Activated CD4-positive, alpha-beta T cell treated with anti-CD3 and anti-CD28 coated beads, Interleukin-2, amount 10 ng/mL, durations not matched to agents 24 days and 14 days (primary cell): ENCODE measurements at regions of chr4 and their contacts with region 1.

Region 1: GRCh38 chr4:2745981-2746806 is 9.9 kb downstream of the TNIP2 start:
- DNase-seq: peak; percentile 97
- H3K4me3 Mint-ChIP-seq: peak overlapping the region; percentile 81
- H3K27ac Mint-ChIP-seq: peak overlapping the region; percentile 94
- H3K4me1 Mint-ChIP-seq: peaks cover 60% of the 10 kb centered on the region
- H3K27me3 Mint-ChIP-seq: no peaks in the 10 kb centered on the region

Region 2: GRCh38 chr4:2241410-2242353 is 504.5 kb before region 1 on chr4 and contains the starts of genes HAUS3 and POLN:
- intact Hi-C with region 1: loop called (anchors 2 kb)
- DNase-seq: peak; percentile 100
- H3K4me3 Mint-ChIP-seq: peak within 1 kb of the TSS; percentile 84
- H3K27ac Mint-ChIP-seq: peak within 1 kb of the TSS; percentile 93
- H3K4me1 Mint-ChIP-seq: peaks cover 49% of the 10 kb centered on the region
- H3K27me3 Mint-ChIP-seq: peaks cover 2% of the 10 kb centered on the region
- total RNA-seq, gene HAUS3: 19.3 and 19.4 TPM in 2 replicates
- total RNA-seq, gene POLN: 1.9 and 2.3 TPM in 2 replicates

Region 3: GRCh38 chr4:2536193-2537010 is 209.8 kb before region 1 on chr4 and contains the start of gene FAM193A:
- intact Hi-C with region 1: loop called (anchors 1 kb)
- DNase-seq: peak; percentile 100
- H3K4me3 Mint-ChIP-seq: peak within 1 kb of the TSS; percentile 92
- H3K27ac Mint-ChIP-seq: peak within 1 kb of the TSS; percentile 95
- H3K4me1 Mint-ChIP-seq: peaks cover 11% of the 10 kb centered on the region
- H3K27me3 Mint-ChIP-seq: no peaks in the 10 kb centered on the region
- total RNA-seq, gene FAM193A: 29.5 and 30.1 TPM in 2 replicates

Region 4: GRCh38 chr4:2714061-2714770 is 32.0 kb before region 1 on chr4:
- intact Hi-C with region 1: loop called (anchors 5 kb)
- DNase-seq: peak; percentile 84
- H3K4me3 Mint-ChIP-seq: peak overlapping the region; percentile 68
- H3K27ac Mint-ChIP-seq: peak overlapping the region; percentile 84
- H3K4me1 Mint-ChIP-seq: peaks cover 26% of the 10 kb centered on the region
- H3K27me3 Mint-ChIP-seq: no peaks in the 10 kb centered on the region

Region 5: DNA sequence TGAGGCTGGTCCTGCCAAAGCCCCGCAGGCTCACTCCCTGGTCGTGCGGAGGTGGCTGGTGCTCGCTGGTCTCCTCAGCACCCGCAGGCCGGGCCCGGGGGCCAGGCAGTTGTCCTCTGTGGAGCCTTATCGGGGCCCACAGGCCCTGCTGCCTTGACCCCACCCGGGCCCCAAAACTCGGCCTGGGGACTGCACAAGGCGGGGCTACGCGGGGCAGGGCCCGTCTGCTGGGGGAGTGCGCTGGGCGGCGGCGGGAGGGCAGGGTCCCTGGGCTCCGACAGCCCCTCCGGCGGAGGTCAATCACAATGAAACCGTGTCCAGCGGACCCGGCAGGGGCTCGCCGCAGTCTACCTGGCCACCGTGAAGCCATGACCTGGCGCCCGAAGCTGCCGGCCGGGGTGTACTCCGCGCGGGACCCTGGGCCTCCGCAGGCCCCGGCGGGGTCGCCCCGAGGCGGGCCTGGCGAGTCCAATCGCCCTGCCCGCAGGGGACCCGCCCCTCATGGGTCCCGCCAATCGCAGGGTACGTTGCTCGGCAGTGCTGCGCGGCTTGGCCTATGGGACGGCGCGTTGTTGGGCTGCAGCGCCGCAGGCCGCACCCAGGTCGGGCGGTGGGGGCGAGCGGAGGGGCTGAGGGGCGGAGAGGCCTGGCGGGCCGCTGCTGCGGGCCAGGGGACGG is 97.2 kb after region 1 on chr4 and contains the start of gene ADD1:
- intact Hi-C with region 1: loop called (anchors 2 kb)
- DNase-seq: peak; percentile 100
- H3K4me3 Mint-ChIP-seq: peak within 1 kb of the TSS; percentile 91
- H3K27ac Mint-ChIP-seq: peak within 1 kb of the TSS; percentile 92
- H3K4me1 Mint-ChIP-seq: peaks cover 41% of the 10 kb centered on the region
- H3K27me3 Mint-ChIP-seq: no peaks in the 10 kb centered on the region
- total RNA-seq, gene ADD1: 187 and 198 TPM in 2 replicates

Region 6: DNA sequence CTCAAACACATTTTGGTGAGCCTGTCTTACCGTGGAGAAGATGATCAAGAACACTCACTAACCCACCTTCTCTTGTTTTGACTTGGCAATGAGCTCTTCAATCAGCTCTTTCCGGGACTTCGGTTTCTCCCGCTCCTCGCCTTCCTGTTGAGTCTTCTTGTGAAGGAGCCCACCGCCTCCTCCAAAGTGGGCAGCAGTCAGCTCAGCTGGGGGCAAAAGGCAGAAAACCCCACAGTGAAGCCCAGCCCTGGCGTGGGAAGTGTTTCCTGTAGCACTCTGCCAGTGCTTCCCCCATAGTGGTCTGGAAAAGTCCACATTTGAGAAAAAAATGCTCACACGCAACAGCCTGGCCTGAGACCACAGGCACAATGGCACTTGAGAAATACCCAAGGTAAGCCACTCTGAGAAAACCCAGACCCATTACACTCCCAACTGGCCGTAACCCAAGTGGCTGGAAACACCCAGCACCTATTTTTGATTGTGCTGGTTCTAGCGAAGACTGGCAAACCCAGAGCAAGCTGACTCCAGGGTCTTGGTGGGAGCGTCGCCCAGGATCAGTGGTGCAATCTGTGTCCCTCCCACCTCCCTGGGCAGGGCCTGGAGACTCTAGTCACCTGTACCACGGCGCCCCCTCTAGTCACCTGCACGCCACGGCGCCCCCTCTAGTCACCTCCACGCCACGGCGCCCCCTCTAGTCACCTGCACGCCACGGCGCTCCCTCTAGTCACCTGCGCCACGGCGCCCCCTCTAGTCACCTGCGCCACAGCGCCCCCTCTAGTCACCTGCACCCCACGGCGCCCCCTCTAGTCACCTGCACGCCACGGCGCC is 208.4 kb after region 1 on chr4:
- intact Hi-C with region 1: loop called (anchors 2 kb)
- DNase-seq: peak; percentile 86
- H3K4me3 Mint-ChIP-seq: peak overlapping the region; percentile 75
- H3K27ac Mint-ChIP-seq: peak overlapping the region; percentile 99
- H3K4me1 Mint-ChIP-seq: peaks cover 63% of the 10 kb centered on the region
- H3K27me3 Mint-ChIP-seq: no peaks in the 10 kb centered on the region

Region 7: DNA sequence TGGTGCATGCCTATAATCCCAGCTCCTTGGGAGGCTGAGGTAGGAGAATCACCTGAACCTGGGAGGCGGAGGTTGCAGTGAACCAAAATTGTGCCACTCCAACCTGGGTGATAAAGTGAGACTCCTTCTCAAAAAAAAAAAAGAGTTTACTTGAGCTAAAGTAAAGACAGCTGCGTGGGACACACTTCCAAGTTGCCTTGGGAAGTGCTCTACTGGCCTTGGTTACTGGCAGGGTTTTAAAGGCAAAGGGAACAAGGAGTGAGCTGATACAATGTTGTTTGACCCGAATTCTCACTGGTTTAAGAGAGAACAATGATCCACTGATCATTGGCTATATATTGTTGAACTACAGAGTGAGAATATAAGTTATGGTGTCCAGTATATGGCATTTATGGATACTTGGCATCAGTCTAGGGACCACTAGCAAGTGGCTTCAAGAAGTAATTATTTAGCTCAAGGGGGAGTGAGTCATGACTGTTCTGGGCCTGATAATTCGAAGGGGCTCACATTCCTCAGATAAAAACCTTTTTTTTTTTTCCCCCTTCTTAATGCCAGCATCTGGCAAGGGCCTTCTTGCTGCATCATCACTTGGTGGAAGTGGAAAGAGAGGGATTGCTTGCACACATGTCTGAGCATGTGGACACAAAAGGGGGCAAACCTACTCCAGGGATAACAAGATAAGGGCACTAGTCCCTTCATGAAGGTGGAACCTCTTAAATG is 249.5 kb after region 1 on chr4:
- intact Hi-C with region 1: no loop called
- DNase-seq: no peak
- H3K4me3 Mint-ChIP-seq: no peak overlapping the region
- H3K27ac Mint-ChIP-seq: no peak overlapping the region
- H3K4me1 Mint-ChIP-seq: no peaks in the 10 kb centered on the region
- H3K27me3 Mint-ChIP-seq: peaks cover 21% of the 10 kb centered on the region

Region 8: DNA sequence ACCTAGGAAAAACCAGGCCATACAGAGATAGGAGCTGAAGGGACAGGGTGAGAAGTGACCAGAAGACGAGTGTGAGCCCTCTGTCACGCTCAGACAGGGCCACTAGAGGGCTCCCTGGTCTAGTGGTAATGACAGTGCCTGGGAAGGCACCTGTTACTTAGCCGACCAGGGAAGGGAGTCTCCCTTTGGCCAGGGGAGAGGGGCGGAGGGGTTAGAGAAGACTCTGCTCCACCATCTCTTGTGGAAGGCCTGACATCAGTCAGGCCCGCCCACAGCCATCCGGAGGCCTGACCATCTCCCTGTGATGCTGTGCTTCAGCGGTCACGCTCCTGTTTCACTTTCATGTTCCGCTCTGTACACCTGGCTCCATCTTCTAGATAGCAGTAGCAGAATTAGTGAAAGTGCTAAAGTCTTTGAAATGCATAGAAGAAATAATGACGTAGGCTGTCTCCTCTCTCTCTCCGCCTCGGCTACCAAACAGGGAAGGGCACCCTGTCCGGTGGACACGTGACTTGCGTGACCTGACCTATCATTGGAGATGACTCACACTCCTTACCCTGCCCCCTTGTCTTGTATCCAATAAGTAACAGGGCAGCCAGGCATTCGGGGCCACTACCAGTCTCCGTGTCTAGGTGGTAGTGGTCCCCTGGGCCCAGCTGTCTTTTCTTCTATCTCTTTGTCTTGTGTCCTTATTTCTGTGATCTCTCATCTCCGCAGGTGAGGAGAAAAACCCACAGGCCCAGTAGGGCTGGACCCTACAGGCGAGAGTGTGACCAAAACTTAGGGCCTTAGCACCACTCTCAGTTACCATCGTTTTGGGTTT is 301.5 kb after region 1 on chr4:
- intact Hi-C with region 1: loop called (anchors 10 kb)
- DNase-seq: peak; percentile 95
- H3K4me3 Mint-ChIP-seq: peak overlapping the region; percentile 60
- H3K27ac Mint-ChIP-seq: peak overlapping the region; percentile 68
- H3K4me1 Mint-ChIP-seq: peaks cover 38% of the 10 kb centered on the region
- H3K27me3 Mint-ChIP-seq: peaks cover 10% of the 10 kb centered on the region